Activated B cell treated with CpG ODN at 0.5 μM for 24 hours (primary cell): ENCODE measurements at regions of chr18 and their contacts with region 1.

Region 1: GRCh38 chr18:58180738-58181353 is 136.8 kb downstream of the NEDD4L start:
- DNase-seq: peak; percentile 31
- ATAC-seq: peak; percentile 61
- H3K4me3 Mint-ChIP-seq: no peak overlapping the region
- H3K27ac Mint-ChIP-seq: no peak overlapping the region
- H3K4me1 Mint-ChIP-seq: peaks cover 4% of the 10 kb centered on the region
- H3K27me3 Mint-ChIP-seq: no peaks in the 10 kb centered on the region
- CTCF ChIP-seq: peak; percentile 63

Region 2: GRCh38 chr18:57881818-57882413 is 298.9 kb before region 1 on chr18:
- CTCF ChIA-PET with region 1: interaction called, 15 read pairs
- POLR2A ChIA-PET with region 1: interaction called, 3 read pairs
- intact Hi-C with region 1: loop called (anchors 1 kb)
- DNase-seq: peak; percentile 37
- ATAC-seq: peak; percentile 99
- H3K4me3 Mint-ChIP-seq: no peak overlapping the region
- H3K27ac Mint-ChIP-seq: no peak overlapping the region
- H3K4me1 Mint-ChIP-seq: peaks cover 8% of the 10 kb centered on the region
- H3K27me3 Mint-ChIP-seq: no peaks in the 10 kb centered on the region
- CTCF ChIP-seq: peak; percentile 79

Region 3: GRCh38 chr18:58034370-58034769 is 146.5 kb before region 1 on chr18:
- CTCF ChIA-PET with region 1: no interaction called
- POLR2A ChIA-PET with region 1: no interaction called
- intact Hi-C with region 1: no loop called
- DNase-seq: no peak
- ATAC-seq: no peak
- H3K4me3 Mint-ChIP-seq: no peak overlapping the region
- H3K27ac Mint-ChIP-seq: no peak overlapping the region
- H3K4me1 Mint-ChIP-seq: peaks cover 12% of the 10 kb centered on the region
- H3K27me3 Mint-ChIP-seq: peaks cover 4% of the 10 kb centered on the region
- CTCF ChIP-seq: no peak

Region 4: GRCh38 chr18:58117786-58118403 is 63.0 kb before region 1 on chr18:
- CTCF ChIA-PET with region 1: interaction called, 11 read pairs
- POLR2A ChIA-PET with region 1: no interaction called
- intact Hi-C with region 1: loop called (anchors 1 kb)
- DNase-seq: no peak
- ATAC-seq: no peak
- H3K4me3 Mint-ChIP-seq: no peak overlapping the region
- H3K27ac Mint-ChIP-seq: no peak overlapping the region
- H3K4me1 Mint-ChIP-seq: peaks cover 10% of the 10 kb centered on the region
- H3K27me3 Mint-ChIP-seq: no peaks in the 10 kb centered on the region
- CTCF ChIP-seq: no peak

Region 5: GRCh38 chr18:58148954-58149471 is 31.8 kb before region 1 on chr18:
- CTCF ChIA-PET with region 1: interaction called, 3 read pairs
- POLR2A ChIA-PET with region 1: no interaction called
- intact Hi-C with region 1: loop called (anchors 1 kb)
- DNase-seq: no peak
- ATAC-seq: peak; percentile 88
- H3K4me3 Mint-ChIP-seq: peak overlapping the region; percentile 67
- H3K27ac Mint-ChIP-seq: peak overlapping the region; percentile 73
- H3K4me1 Mint-ChIP-seq: peaks cover 17% of the 10 kb centered on the region
- H3K27me3 Mint-ChIP-seq: no peaks in the 10 kb centered on the region
- CTCF ChIP-seq: no peak

Region 6: GRCh38 chr18:58223717-58224424 is 43.0 kb after region 1 on chr18:
- CTCF ChIA-PET with region 1: interaction called, 4 read pairs
- POLR2A ChIA-PET with region 1: no interaction called
- intact Hi-C with region 1: loop called (anchors 2 kb)
- DNase-seq: no peak
- ATAC-seq: no peak
- H3K4me3 Mint-ChIP-seq: peak overlapping the region; percentile 47
- H3K27ac Mint-ChIP-seq: peak overlapping the region; percentile 72
- H3K4me1 Mint-ChIP-seq: peaks cover 51% of the 10 kb centered on the region
- H3K27me3 Mint-ChIP-seq: no peaks in the 10 kb centered on the region
- CTCF ChIP-seq: no peak

Region 7: DNA sequence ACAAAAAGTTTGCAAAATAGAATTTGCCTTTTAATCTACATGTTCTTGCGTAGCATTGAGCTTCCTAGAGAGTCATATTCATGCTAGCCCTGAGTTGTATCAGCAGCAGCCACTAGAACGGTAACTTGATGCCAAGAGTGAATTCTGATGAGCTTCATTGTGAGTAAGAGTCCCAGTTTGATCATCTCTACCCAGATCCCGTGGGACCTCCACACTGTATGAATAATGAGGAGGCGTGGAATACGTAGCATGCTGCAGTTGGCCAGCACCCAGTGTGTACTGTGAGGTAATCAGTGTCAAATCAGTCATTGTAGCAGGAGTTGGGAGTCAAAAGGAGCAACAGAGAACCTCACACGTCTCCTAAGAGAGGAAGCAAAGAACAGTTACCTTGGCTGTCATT is 61.0 kb after region 1 on chr18:
- CTCF ChIA-PET with region 1: no interaction called
- POLR2A ChIA-PET with region 1: no interaction called
- intact Hi-C with region 1: no loop called
- DNase-seq: no peak
- ATAC-seq: no peak
- H3K4me3 Mint-ChIP-seq: no peak overlapping the region
- H3K27ac Mint-ChIP-seq: no peak overlapping the region
- H3K4me1 Mint-ChIP-seq: no peaks in the 10 kb centered on the region
- H3K27me3 Mint-ChIP-seq: no peaks in the 10 kb centered on the region
- CTCF ChIP-seq: no peak